Activated CD4-positive, alpha-beta T cell treated with anti-CD3 and anti-CD28 coated beads, Interleukin-2, amount 10 ng/mL, durations not matched to agents 24 days and 14 days (primary cell): ENCODE measurements at regions of chr2 and their contacts with region 1.

Region 1: DNA sequence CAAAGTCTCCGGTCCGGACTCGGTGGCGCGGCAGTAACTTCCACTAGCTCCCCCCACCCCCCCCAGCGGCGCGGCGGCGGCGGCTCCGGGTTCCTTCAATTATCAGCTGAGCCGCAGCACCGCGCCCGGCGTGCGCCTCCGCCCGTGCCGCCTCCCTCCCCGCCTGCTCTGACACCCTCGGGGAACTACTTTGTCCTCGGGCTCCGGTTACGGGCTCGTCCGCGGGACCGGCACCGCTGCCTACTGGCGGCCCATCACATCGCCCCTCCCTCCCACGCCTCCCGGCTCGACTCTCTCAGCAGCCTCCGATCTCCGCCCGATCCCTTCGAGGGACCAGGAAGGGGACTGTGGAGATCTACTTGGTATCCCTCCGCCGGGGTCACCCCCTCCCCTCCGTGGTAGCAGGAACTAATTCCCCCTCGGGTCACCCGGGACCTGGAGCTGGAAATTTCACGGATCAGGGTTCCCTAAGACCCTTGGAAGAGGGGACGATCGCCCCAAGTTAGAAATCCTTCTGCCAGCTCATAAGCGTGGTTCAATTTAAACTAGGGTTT is at the start of gene TRIP12:
- DNase-seq: peak; percentile 96
- H3K4me3 Mint-ChIP-seq: peak within 1 kb of the TSS; percentile 100
- H3K27ac Mint-ChIP-seq: peak within 1 kb of the TSS; percentile 99
- H3K4me1 Mint-ChIP-seq: peaks cover 31% of the 10 kb centered on the region
- H3K27me3 Mint-ChIP-seq: no peaks in the 10 kb centered on the region
- total RNA-seq, gene TRIP12: 240 and 246 TPM in 2 replicates

Region 2: GRCh38 chr2:229780856-229781773 is 140.9 kb before region 1 on chr2:
- intact Hi-C with region 1: loop called (anchors 5 kb)
- DNase-seq: no peak
- H3K4me3 Mint-ChIP-seq: no peak overlapping the region
- H3K27ac Mint-ChIP-seq: no peak overlapping the region
- H3K4me1 Mint-ChIP-seq: peaks cover 11% of the 10 kb centered on the region
- H3K27me3 Mint-ChIP-seq: no peaks in the 10 kb centered on the region

Region 3: DNA sequence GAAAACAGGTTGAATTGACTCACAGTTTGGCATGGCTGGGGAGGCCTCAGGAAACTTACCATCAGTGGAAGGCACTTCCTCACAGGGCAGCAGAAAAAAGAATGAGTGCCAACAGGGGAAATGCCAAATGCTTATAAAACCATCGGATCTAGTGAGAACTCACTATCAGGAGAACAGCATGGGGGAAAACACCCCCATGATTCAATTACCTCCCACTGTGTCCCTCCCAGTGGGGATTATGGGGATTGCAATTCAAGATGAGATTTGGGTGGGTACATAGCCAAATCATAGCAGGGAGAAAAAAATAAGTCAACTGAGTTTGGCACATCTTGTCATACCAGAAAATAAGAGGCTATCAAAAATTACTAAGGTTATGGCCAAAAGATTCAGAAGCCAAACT is 96.5 kb before region 1 on chr2:
- intact Hi-C with region 1: loop called (anchors 1 kb)
- DNase-seq: no peak
- H3K4me3 Mint-ChIP-seq: no peak overlapping the region
- H3K27ac Mint-ChIP-seq: no peak overlapping the region
- H3K4me1 Mint-ChIP-seq: peaks cover 24% of the 10 kb centered on the region
- H3K27me3 Mint-ChIP-seq: no peaks in the 10 kb centered on the region

Region 4: DNA sequence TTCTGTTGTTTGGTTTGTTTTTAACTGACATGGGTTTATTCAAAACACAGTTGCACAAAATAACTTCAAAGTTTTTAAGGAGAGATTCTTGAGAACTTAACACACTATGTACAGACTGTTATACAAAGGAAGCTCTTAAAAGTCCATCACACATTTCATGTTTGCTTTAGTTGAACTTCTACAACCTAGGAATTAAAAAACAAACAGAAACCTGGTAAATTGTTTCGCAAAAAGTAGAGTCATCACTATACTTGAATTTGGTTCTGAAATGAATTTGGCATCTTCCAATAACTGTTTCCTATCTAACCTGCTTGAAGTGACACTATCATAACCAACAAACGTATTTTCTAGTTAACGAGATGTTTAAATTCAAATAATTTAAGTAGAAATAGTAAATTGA is 22.0 kb before region 1 on chr2:
- intact Hi-C with region 1: no loop called
- DNase-seq: no peak
- H3K4me3 Mint-ChIP-seq: no peak overlapping the region
- H3K27ac Mint-ChIP-seq: no peak overlapping the region
- H3K4me1 Mint-ChIP-seq: peaks cover 25% of the 10 kb centered on the region
- H3K27me3 Mint-ChIP-seq: no peaks in the 10 kb centered on the region

Region 5: GRCh38 chr2:229910832-229911412 is 11.0 kb before region 1 on chr2:
- intact Hi-C with region 1: loop called (anchors 1 kb)
- DNase-seq: no peak
- H3K4me3 Mint-ChIP-seq: no peak overlapping the region
- H3K27ac Mint-ChIP-seq: peak overlapping the region; percentile 32
- H3K4me1 Mint-ChIP-seq: peaks cover 30% of the 10 kb centered on the region
- H3K27me3 Mint-ChIP-seq: no peaks in the 10 kb centered on the region

Region 6: DNA sequence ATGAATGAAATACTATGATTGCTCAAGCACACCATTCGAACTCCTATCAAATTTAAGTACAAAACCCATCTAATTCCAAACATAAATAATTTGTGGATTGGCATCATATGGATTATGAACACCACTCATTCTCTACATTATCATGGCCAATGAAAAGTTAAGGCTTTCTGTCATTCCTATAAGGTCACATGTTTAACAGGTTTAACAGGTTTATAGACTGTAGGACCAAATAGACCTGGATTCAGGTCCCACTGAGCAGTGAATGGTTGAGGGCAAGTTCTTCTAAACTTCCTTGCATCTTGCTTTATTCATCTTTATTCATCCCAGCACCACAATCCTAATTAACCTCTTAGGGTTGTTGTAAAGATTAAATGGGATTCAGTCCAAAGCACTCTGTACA is 33.7 kb after region 1 on chr2:
- intact Hi-C with region 1: no loop called
- DNase-seq: no peak
- H3K4me3 Mint-ChIP-seq: no peak overlapping the region
- H3K27ac Mint-ChIP-seq: no peak overlapping the region
- H3K4me1 Mint-ChIP-seq: no peaks in the 10 kb centered on the region
- H3K27me3 Mint-ChIP-seq: no peaks in the 10 kb centered on the region